ENCODE measurements at regions of chr4 and their contacts with region 1.

Region 1: GRCh38 chr4:111631215-111631999 is 513.8 kb upstream of the FAM241A start:
- ATAC-seq: peak in 5 of 8 experiments; percentile 12 to 87 (median 46)
- H3K4me3 ChIP-seq: no peak overlapping the region
- H3K27ac ChIP-seq: no peak overlapping the region
- H3K4me1 ChIP-seq: peaks cover 2 to 8% of the 10 kb centered on the region in 2 donors

Region 2: GRCh38 chr4:110622841-110623717 is 1008.3 kb before region 1 on chr4 and contains the start of gene PITX2:
- in situ Hi-C with region 1: loop called in 5 of 9 experiments (anchors 10 to 25 kb)
- ATAC-seq: peak in 7 of 8 experiments; percentile 98 to 99 (median 99)
- H3K4me3 ChIP-seq: peak within 1 kb of the TSS; percentile 32 to 51 (median 36)
- H3K27ac ChIP-seq: no peak within 1 kb of the TSS
- H3K4me1 ChIP-seq: peaks cover 5 to 8% of the 10 kb centered on the region in 2 donors
- total RNA-seq, gene PITX2: 0.05 to 34.1 (median 0.94) TPM

Region 3: DNA sequence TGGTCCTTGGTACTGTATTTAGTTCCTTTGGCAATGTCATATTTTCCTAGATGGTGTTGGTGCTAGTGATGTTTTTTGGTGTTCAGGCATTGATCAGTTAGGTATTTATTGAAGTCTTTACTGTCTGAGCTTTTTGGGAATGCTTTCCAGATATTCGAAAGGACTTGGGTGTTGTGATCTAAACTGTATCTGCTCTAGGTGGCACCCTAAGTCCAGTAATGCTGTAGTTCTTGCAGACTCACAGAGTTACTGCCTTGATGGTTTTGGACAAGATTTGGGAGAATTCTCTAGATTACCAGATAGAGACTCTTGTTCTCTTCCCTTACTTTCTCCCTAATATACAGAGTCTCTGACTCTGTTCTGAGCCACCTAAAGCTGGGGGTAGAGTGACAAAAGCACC is 495.0 kb before region 1 on chr4:
- in situ Hi-C with region 1: loop called in 2 of 9 experiments (anchors 10 to 25 kb)
- ATAC-seq: peak in 3 of 8 experiments; percentile 57 to 82 (median 69)
- H3K4me3 ChIP-seq: no peak overlapping the region
- H3K27ac ChIP-seq: no peak overlapping the region
- H3K4me1 ChIP-seq: no peaks in the 10 kb centered on the region

Region 4: GRCh38 chr4:111905511-111905910 is 274.1 kb after region 1 on chr4:
- in situ Hi-C with region 1: no loop called
- ATAC-seq: no peak
- H3K4me3 ChIP-seq: no peak overlapping the region
- H3K27ac ChIP-seq: no peak overlapping the region
- H3K4me1 ChIP-seq: no peaks in the 10 kb centered on the region

Measured in motor neuron (in vitro differentiated cells).